ENCODE measurements at regions of chr1 and their contacts with region 1.

Region 1: DNA sequence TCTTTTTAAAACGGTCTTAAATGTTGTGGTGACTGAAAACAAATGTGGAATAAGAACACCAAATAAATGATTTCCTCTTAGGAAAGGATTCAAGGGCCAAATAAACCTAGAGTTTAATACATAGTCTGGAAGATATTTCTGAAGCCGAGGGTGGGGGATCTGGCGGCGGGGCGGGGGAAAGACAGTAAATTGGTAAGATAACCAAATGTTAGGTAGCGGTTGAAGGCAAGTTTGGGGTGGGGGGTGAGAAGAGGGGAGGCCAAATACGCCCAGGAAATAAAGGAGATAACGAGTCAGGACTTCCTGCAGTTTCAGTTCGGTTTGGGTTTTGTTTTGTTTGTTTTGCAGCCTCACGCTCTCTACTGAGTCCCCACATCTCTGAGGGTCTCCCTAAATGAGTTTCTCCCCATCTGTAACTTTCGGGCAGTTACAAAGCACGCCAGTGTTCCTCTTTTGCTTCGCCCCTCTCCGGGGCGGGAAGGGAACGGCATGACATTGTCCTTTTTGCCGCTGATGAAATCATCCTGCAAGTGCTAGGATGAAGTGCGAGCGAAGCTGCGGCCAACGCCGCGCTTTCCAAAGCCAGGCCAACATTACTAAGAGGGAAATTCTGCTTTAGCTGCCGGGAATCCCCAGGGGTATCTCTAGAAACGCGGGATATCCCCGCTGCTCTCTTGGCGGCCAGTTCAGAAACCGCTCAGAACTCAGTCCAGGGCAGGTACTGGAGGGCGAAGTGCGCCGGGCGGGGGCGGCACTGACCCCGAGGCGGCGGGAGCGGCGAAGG is 844 bp downstream of the NIBAN1 start:
- DNase-seq: peak; percentile 74
- H3K4me3 ChIP-seq: peak overlapping the region; percentile 84
- H3K27ac ChIP-seq: peak overlapping the region; percentile 92
- H3K4me1 ChIP-seq: peaks cover 26% of the 10 kb centered on the region
- H3K27me3 ChIP-seq: no peaks in the 10 kb centered on the region
- CTCF ChIP-seq: no peak

Region 2: GRCh38 chr1:184754476-184755225 is 218.8 kb before region 1 on chr1 and contains the start of gene EDEM3:
- CTCF ChIA-PET with region 1: no interaction called
- POLR2A ChIA-PET with region 1: no interaction called
- intact Hi-C with region 1: no loop called
- DNase-seq: peak; percentile 100
- H3K4me3 ChIP-seq: peak within 1 kb of the TSS; percentile 86
- H3K27ac ChIP-seq: peak within 1 kb of the TSS; percentile 81
- H3K4me1 ChIP-seq: peaks cover 10% of the 10 kb centered on the region
- H3K27me3 ChIP-seq: no peaks in the 10 kb centered on the region
- CTCF ChIP-seq: no peak
- total RNA-seq, gene EDEM3: 23.4 and 24.3 TPM in 2 replicates

Region 3: DNA sequence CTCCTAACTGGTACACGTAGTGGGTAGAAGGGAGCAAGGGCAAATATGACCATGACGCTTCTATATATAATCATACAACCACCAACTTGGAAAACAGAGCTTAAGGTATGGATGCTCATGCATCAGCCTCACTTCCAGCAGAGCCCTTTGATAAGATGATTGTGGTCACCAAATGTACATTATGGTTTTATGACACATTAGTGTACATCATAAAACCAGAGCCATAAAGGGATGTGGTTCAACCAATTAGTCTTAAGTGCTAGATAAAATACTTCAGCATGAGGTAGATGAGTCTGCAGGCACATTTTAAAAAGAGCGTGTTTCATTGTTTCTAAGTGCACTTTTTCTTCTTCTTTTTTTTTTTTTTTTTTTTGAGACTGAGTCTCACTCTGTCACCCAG is 42.8 kb before region 1 on chr1:
- CTCF ChIA-PET with region 1: no interaction called
- POLR2A ChIA-PET with region 1: interaction called, 17 read pairs
- intact Hi-C with region 1: no loop called
- DNase-seq: no peak
- H3K4me3 ChIP-seq: no peak overlapping the region
- H3K27ac ChIP-seq: no peak overlapping the region
- H3K4me1 ChIP-seq: peaks cover 11% of the 10 kb centered on the region
- H3K27me3 ChIP-seq: no peaks in the 10 kb centered on the region
- CTCF ChIP-seq: no peak

Measured in A673 (cell line).